GM10248 (cell line): ENCODE measurements at regions of chr9 and their contacts with region 1.

Region 1: GRCh38 chr9:6055213-6055612 is 39.8 kb upstream of the RANBP6 start:
- DNase-seq: peak; percentile 29
- CTCF ChIP-seq: peak; percentile 57

Region 2: DNA sequence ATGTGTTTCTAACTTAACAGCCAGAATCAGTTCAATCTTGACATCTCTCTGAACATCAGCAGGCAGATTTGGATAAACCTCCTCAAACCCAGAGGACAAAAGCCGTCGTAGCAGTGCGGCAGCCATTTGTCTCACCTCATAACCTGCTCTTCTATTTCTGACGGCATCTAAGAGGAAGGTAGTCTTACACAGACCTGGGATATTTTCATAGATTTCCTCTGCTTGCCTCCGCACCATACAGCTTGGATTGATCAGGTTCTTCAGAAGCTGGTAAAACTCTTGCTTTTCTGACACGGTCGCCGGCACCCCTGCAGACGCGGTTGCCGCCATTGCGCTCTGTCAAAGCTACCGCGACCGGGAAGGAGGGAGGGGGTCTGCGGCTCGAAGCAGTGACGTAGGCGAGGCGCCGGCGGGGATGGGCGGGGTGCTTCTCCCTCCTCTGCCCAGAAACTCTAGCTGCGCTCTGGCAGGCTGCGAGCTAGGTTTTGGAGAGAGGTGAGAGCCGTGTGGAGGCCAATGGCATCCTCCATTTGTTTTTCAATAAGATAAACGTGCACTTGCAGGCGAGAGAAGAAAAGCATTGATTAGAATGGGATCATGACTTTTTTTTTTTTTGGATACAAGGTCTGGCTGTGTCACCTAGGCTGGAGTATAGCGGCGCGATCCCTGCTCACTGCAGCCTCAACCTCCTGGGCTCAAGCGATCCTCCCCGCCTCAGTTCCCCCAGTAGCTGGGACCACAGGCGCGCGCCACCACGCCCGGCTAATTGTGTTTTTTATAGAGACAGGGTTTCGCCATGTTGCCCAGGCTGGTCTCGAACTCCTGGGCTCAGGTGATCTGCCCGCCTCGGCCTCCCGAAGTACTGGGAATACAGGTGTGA is 39.7 kb before region 1 on chr9 and contains the start of gene RANBP6:
- CTCF ChIA-PET with region 1: interaction called, 11 read pairs
- POLR2A ChIA-PET with region 1: no interaction called
- DNase-seq: peak; percentile 92
- CTCF ChIP-seq: no peak

Region 3: DNA sequence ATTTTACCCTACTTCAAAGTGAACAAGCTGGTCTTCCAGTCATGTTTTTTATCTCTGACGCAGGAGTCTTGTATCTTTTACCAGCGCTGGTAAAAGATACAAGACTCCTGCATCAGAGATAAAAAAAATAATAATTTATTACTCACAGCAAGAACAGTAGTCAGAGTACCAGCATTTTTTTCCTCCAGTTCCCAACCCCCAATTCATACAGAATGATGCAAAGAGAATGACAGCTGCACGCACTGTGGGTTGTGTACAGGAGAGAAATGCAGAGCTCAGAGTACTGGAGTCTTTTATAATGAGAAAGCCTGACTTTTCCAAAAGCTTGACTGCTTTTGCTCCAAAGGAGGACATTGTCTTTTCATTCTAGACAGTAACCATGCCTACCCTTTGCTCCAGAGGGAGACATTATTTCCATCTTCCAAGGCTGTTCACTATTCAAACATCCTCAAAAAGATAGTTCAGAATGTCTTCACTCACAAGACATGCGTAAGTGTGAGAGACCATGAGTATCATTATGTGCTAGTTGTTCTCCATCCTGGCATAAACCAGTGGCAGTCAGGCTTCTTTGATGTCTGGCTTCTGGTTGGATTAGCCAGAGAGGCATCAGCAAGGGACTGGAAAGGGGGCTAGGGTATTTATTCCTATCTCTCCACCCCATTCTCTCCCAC is 25.5 kb before region 1 on chr9:
- CTCF ChIA-PET with region 1: interaction called, 22 read pairs
- POLR2A ChIA-PET with region 1: no interaction called
- DNase-seq: no peak
- CTCF ChIP-seq: no peak

Region 4: DNA sequence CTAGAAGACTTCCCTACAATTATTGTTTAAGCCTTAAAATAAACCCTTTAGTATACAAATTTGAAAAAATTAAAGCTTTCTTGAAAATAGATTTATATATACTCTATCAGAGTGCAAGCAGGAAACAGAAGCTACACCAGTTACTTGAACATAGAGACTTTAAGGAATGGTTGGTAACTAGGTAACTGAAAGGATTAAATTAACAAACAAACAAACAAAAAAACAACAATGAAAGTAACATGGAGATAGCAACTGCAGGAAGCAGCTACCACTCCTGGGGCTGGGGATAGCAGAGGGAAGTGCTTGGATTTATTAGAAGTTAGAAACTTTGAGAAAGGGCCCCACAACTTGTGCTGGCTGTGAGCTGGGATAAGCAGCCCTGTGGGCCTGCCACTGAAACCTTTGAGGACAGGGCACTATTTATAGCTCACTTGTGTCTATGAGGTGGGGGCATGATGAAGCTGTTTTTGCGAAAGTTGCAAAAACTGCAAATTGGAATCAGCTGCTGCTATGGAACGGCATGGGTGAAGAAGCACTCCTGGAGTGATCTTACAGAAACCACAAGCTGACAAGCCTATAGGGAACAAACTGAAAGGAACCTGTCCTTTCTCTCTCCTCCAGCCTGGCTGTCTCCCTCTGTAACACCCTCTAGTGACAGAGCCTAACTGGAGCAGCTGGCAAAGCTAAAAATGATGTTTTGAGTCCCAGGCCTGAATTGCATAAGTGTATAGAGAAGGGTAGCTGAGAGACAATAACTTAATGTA is 51.5 kb after region 1 on chr9:
- CTCF ChIA-PET with region 1: interaction called, 12 read pairs
- POLR2A ChIA-PET with region 1: no interaction called
- DNase-seq: peak; percentile 47
- CTCF ChIP-seq: peak; percentile 33

Region 5: GRCh38 chr9:6160579-6160978 is 105.4 kb after region 1 on chr9:
- CTCF ChIA-PET with region 1: no interaction called
- POLR2A ChIA-PET with region 1: no interaction called
- DNase-seq: no peak
- CTCF ChIP-seq: no peak